ENCODE measurements at regions of chr16 and their contacts with region 1.

Region 1: GRCh38 chr16:9072806-9073341 is 18.6 kb upstream of the HAPSTR1 start:
- DNase-seq: no peak
- H3K4me3 Mint-ChIP-seq: no peak overlapping the region
- H3K27ac Mint-ChIP-seq: peak overlapping the region; percentile 73
- H3K4me1 Mint-ChIP-seq: peaks cover 34% of the 10 kb centered on the region
- H3K27me3 Mint-ChIP-seq: no peaks in the 10 kb centered on the region

Region 2: DNA sequence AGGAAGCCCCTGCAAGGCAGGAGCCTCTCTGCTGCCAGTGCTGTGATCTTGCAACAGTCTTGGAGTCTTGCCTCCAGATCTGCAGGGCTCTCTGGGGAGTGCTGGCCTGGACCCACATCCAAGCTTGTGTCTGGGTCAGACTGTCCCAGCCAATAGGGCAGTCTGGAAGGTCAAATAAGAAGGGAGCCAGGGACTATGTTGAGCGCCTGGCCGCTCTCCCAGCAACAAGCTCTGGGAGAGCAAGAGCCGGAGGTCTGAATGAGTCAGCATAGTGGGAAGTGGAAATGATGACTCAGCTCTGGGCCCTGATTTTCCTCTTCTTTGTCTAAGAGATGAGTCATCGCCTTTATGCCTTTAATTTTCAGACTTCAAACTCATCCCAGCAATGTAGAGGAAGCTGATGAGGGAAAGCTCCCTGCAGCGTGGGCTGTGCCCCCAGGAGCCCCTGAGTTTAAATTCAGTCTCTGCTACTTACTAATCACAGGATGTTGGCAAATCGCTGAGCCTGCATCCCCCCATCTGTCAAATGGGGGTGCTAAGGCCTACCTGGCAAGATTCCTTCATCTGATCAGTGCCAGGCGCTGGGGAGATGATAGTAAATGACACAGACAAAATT is 25.1 kb before region 1 on chr16:
- intact Hi-C with region 1: loop called (anchors 1 kb)
- DNase-seq: peak; percentile 53
- H3K4me3 Mint-ChIP-seq: peak overlapping the region; percentile 20
- H3K27ac Mint-ChIP-seq: peak overlapping the region; percentile 61
- H3K4me1 Mint-ChIP-seq: peaks cover 27% of the 10 kb centered on the region
- H3K27me3 Mint-ChIP-seq: no peaks in the 10 kb centered on the region

Region 3: GRCh38 chr16:9107025-9107970 is 34.4 kb after region 1 on chr16:
- intact Hi-C with region 1: no loop called
- DNase-seq: no peak
- H3K4me3 Mint-ChIP-seq: no peak overlapping the region
- H3K27ac Mint-ChIP-seq: peak overlapping the region; percentile 49
- H3K4me1 Mint-ChIP-seq: peaks cover 76% of the 10 kb centered on the region
- H3K27me3 Mint-ChIP-seq: no peaks in the 10 kb centered on the region